ENCODE measurements at regions of chr11 and their contacts with region 1.

Region 1: DNA sequence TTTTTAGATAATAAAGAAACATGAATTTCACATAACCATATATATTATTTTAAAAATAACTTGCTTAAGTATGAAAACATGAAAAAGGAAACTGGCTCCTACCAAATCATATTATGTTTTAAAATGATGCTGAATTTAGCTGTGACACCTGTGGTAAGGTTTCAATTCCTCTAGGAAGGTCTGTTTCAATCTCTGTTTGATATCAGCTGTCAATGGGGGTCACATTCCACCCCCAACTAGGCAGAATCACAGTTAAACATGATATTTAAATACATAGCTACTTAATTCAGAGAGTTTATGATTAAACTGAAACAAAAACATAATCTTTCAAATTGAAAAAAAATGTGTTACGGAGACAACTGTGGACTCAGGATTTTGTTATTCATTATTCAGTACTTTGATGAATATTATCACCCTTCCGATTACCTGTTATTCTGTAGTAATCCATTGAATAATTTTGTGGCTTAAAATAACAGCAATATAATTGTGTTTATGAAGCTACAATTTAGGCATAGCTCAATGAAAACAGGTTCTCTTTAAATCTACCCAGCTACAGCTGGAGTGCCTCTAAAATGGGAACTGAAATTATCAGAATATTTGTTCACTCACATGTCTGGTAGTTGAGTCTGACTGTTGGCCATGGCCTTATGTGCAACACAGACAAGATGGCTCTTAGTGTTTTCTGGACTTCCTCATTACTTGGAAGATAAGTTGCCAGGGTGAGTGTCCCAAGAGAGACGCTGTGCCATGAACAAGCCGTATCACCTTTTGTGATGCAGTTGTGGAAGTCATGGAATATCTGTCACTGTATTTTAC is 244.6 kb upstream of the ANO3 start:
- DNase-seq: no peak
- H3K4me3 ChIP-seq: no peak overlapping the region
- H3K27ac ChIP-seq: no peak overlapping the region
- H3K4me1 ChIP-seq: no peaks in the 10 kb centered on the region
- H3K27me3 ChIP-seq: no peaks in the 10 kb centered on the region
- CTCF ChIP-seq: no peak
- EP300 ChIP-seq: no peak
- POLR2A ChIP-seq: no peak

Region 2: DNA sequence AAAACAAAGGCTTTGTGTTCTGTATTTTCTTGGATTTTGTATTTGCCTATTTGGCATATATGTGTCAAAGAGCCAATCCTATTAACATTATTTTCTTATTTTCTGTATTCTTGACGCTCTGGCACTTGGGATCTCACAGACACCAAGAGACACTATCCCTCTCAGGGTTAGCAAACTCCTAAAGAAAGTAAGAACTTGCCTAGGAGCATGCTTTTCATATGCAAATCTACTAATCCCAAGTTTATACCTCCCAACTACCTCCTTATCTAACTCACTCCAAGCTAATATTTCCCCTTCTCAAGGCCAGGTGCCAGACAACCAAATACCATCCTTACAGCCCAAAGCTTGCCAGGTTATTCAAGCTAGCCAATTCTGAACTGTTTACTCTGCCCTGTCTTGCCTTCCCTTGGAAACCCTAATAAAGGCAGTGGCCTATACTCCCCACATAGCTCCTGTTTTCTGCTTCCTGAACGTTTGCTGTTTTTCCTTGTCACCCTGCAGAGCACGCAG is 210.8 kb before region 1 on chr11:
- in situ Hi-C with region 1: no loop called
- intact Hi-C with region 1: loop called (anchors 5 kb)
- DNase-seq: no peak
- H3K4me3 ChIP-seq: no peak overlapping the region
- H3K27ac ChIP-seq: no peak overlapping the region
- H3K4me1 ChIP-seq: no peaks in the 10 kb centered on the region
- H3K27me3 ChIP-seq: no peaks in the 10 kb centered on the region
- CTCF ChIP-seq: no peak
- EP300 ChIP-seq: no peak
- POLR2A ChIP-seq: no peak

Region 3: GRCh38 chr11:27124514-27125264 is 1037.4 kb after region 1 on chr11:
- in situ Hi-C with region 1: no loop called
- intact Hi-C with region 1: no loop called
- DNase-seq: no peak
- H3K4me3 ChIP-seq: no peak overlapping the region
- H3K27ac ChIP-seq: no peak overlapping the region
- H3K4me1 ChIP-seq: no peaks in the 10 kb centered on the region
- H3K27me3 ChIP-seq: no peaks in the 10 kb centered on the region
- CTCF ChIP-seq: no peak
- EP300 ChIP-seq: no peak
- POLR2A ChIP-seq: no peak

Measured in transverse colon (tissue), 4 donors.